ENCODE measurements at regions of chr1 and their contacts with region 1.

Region 1: DNA sequence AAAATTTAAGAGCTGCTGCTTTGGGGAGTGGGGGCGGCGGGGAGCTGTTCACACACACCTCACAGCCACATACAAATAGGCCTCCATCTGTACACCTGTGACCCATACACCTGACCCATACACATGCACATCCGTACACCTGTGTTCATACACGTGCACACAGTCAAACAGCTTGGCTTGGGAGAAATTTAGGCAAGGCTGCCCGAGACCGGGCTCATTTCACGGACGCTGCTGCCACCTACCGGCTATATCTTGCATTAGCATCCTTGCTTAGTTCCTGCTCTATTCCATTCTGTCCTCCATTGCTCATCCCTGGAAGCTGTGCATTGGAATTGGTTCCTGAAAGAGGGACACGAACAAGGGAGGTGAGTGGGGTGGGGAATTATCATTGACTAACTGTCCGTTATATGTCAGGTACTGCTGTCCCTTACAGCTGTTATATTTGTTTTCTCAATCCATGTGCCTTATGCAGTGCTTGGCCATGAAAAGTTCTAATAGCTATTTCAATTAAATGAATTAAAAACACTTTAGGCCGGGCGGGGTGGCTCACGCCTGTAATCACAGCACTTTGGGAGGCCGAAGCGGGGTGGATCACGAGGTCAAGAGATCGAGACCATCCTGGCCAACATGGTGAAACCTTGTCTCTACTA is 37.1 kb upstream of the EPB41 start:
- DNase-seq: peak; percentile 56 to 86 (median 78)
- H3K4me3 ChIP-seq: peak overlapping the region in 6 of 59 donors; percentile 2 to 18 (median 12)
- H3K27ac ChIP-seq: no peak overlapping the region
- H3K27me3 ChIP-seq: no peaks in the 10 kb centered on the region
- CTCF ChIP-seq: peak in 55 of 56 donors; percentile 84 to 99 (median 96)

Region 2: DNA sequence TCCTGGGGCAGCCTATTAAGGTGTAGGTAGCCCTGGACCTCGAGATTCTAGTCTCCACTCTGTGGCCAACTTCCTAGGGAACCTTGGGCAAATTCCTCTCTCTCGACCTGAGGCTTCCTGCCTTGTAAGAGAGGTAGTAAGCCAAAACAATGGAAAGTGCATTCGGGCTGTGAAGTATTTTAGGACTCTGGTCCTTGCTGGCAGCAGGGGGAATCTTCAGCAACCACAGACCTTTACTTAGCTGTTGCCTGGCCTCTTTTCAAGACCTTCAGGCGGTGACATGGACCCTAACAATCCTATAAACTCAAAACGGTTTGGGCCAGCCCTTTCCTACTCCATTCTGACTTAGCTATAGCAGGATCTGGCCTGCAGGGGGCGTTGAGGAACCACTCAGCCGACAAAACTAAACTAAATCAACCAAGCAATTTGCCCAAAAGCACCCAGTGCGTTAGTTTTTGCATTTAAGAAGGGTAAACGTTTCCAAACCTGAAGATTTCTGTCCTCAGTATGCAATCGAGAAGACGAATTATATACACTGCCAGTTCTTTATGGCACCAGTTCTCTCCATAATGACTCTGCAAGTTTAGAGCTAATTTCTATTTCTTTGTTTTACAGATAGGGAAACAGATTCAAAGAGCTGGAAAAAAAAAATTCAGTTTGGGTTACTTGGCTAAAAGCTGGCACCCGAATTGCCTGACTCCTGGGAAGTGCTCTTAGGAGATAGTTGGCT is 628.8 kb before region 1 on chr1:
- intact Hi-C with region 1: loop called in 1 of 2 experiments (anchors 5 kb)
- DNase-seq: peak; percentile 69 to 89 (median 78)
- H3K4me3 ChIP-seq: peak overlapping the region in 51 of 59 donors; percentile 7 to 82 (median 33)
- H3K27ac ChIP-seq: peak overlapping the region; percentile 6 to 96 (median 85)
- H3K27me3 ChIP-seq: no peaks in the 10 kb centered on the region
- CTCF ChIP-seq: peak; percentile 83 to 97 (median 94)

Region 3: GRCh38 chr1:28518000-28518744 is 359.1 kb before region 1 on chr1:
- intact Hi-C with region 1: loop called in 1 of 2 experiments (anchors 5 kb)
- DNase-seq: peak; percentile 81 to 90 (median 85)
- H3K4me3 ChIP-seq: peak overlapping the region; percentile 39 to 88 (median 72)
- H3K27ac ChIP-seq: peak overlapping the region in 52 of 59 donors; percentile 4 to 94 (median 80)
- H3K27me3 ChIP-seq: no peaks in the 10 kb centered on the region
- CTCF ChIP-seq: peak; percentile 89 to 100 (median 99)

Region 4: DNA sequence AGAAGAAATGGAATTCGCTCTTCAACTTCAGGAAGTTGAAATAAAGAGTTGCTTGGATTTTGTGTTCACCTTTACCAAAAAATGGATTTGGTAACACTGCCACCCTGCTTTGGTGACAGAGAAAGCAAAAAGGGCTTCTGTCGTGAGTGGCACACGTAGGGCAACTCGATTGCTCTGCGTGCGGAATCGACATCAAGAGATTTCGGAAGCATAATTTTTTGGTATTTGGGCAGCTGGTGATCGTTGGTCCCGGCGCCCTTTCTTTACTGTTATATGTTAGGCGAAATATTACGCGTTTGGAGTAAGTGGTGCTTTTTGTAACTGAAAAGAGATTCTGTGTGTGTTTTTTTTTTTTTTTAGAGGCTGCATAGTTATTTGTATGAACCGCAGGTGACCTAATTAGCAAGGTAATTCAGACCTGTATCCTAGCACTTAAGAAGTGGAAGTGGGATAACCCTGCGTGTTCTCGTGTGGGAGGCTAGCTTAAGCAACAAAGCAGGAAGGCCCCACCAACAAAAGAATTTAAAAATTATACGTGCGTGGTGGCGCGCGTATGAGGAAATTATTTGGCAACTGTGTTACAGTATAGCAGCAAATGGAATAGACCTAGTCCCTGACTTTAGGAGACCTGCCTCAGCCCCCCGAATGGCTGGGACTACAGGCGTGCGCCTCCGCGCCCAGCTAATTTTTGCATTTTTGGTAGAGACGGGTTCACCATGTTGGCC is 228.6 kb before region 1 on chr1 and contains the start of gene RNU11:
- intact Hi-C with region 1: loop called (anchors 5 kb)
- DNase-seq: peak; percentile 57 to 91 (median 86)
- H3K4me3 ChIP-seq: peak within 1 kb of the TSS; percentile 20 to 70 (median 57)
- H3K27ac ChIP-seq: peak within 1 kb of the TSS; percentile 54 to 100 (median 97)
- H3K27me3 ChIP-seq: no peaks in the 10 kb centered on the region
- CTCF ChIP-seq: peak in 16 of 56 donors; percentile 2 to 32 (median 12)
- total RNA-seq, gene RNU11: not detected

Region 5: DNA sequence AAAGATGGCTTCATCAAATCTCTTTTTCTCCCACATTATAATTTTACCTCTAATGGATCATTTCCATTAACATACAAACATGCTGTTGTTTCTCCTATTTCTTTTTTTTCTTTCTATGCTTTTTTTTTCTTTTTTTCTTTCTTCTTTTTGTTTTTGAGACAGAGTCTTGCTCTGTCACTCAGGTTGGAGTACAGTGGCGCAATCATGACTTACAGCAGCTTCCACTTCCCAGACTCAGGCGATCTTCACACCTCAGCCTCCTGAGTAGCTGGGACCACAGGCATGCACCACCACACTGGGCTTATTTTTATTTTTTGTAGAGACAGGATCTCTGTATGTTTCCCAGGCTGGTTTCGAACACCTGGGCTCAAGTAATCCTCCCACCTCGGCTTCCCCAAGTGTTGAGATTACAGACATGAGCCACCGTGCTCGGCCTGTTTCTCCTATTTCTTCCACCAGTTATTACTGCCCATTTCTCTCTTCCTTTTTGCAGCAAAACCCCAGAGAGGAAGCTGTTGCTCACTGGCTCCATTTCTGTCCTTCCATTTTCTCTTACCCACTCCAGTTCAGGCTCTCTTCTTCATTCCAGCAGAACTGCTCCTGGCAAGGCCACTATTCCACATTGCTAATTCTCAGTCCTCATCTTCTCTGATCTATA is 97.4 kb before region 1 on chr1:
- intact Hi-C with region 1: loop called (anchors 2 kb)
- DNase-seq: no peak
- H3K4me3 ChIP-seq: no peak overlapping the region
- H3K27ac ChIP-seq: no peak overlapping the region
- H3K27me3 ChIP-seq: no peaks in the 10 kb centered on the region
- CTCF ChIP-seq: no peak

Region 6: GRCh38 chr1:28811766-28812668 is 65.2 kb before region 1 on chr1 and contains the start of gene OPRD1:
- intact Hi-C with region 1: no loop called
- DNase-seq: peak in 2 of 10 donors; percentile 62 to 64
- H3K4me3 ChIP-seq: peak within 1 kb of the TSS in 57 of 59 donors; percentile 8 to 66 (median 48)
- H3K27ac ChIP-seq: peak within 1 kb of the TSS in 34 of 59 donors; percentile 18 to 84 (median 58)
- H3K27me3 ChIP-seq: peaks cover 0 to 77% (median 30%) of the 10 kb centered on the region in 45 donors
- CTCF ChIP-seq: no peak
- total RNA-seq, gene OPRD1: 4.5 to 30.2 (median 17.0) TPM

Region 7: GRCh38 chr1:28905921-28906666 is 28.8 kb after region 1 on chr1:
- intact Hi-C with region 1: no loop called
- DNase-seq: no peak
- H3K4me3 ChIP-seq: no peak overlapping the region
- H3K27ac ChIP-seq: no peak overlapping the region
- H3K27me3 ChIP-seq: no peaks in the 10 kb centered on the region
- CTCF ChIP-seq: no peak

Region 8: DNA sequence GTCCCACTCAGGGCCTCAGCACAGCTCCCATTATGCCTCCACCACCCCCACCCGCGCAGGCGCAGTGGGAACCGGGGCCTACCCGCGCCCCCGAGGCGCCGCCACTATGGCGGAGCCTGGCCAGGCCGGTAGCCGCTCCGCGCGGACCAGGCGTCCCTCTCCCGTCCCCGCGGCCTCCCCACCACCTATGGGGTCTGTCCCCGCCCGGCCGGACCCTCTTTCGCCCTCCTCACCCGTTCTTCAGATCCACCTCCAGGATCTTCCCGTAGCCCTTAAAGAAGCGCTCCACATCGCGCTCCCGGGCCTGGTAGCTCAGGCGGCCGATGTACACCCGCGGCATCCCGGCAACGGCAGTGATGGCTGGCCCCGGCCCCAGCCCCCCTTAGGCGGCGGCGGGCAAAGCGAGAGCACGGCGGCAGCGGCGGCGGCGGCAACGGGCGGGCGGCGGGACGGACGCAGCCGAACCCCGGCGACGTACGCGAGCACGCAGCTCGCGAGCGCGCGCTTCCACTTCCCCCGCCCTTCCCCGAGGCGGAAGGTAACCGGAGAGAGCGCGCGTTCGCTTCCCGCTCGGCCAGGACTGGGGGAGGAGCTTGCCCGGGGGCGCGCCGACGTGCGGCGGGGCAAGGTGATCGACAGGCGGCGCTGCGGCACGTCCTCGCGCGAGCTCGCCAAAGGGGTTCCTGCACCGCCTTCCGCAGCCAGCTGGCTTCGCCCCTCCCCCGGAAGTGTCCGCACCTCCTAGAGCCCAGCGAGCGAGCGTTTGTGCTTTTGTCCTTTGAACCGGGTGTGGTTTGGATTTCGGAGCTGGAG is 304.4 kb after region 1 on chr1 and contains the start of gene SRSF4:
- intact Hi-C with region 1: loop called in 1 of 2 experiments (anchors 5 kb)
- DNase-seq: peak; percentile 95 to 99 (median 98)
- H3K4me3 ChIP-seq: peak within 1 kb of the TSS; percentile 66 to 100 (median 95)
- H3K27ac ChIP-seq: peak within 1 kb of the TSS; percentile 87 to 100 (median 99)
- H3K27me3 ChIP-seq: no peaks in the 10 kb centered on the region
- CTCF ChIP-seq: peak; percentile 66 to 94 (median 83)
- total RNA-seq, gene SRSF4: 52.7 to 84.2 (median 65.8) TPM

Region 9: DNA sequence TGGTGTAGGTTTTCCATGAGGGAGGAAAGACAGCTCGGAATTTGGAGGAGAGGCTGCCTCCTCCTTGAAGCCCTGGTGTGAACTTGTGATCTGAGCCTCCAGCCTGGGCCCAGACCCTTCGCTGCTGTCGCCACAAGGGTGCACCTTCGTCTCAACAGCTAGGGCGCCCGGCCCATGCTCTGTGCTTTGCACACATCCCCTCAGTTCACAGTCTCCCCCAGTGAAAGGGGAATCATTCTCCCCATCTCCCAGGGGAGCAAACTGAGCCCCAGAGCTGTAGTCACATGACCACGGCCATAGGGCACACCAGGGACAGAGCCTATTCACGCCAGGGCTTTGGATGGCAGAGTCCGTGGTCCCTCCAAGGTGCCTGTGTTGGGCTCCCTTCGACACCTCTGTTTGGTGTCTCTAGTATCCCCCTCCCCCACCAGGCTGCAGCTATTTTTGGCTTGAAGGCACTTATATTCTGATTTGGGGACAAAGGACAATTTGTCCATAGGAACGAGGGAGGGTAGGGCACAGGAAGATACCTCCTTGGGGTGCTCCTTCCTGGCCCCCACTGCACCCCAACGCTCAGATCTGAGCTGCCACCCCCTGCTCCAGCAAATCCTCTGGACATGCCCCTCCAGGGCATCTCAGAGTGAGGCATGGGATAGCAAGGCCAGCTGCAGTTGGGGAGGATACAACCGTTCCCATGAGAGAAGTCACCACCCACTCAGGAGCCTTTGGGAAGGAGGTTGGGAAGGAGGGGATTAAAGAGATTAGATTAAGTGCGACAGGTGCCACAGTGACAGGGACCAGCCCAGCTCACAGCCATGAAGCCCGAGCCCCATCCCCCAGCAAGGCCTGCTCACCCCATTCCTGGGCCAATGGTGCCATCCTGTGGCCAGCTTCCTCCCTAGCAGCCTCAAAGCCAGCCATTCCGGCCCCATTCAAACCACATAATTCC is 1830.4 kb after region 1 on chr1:
- intact Hi-C with region 1: loop called in 1 of 2 experiments (anchors 5 kb)
- DNase-seq: peak; percentile 69 to 91 (median 84)
- H3K4me3 ChIP-seq: no peak overlapping the region
- H3K27ac ChIP-seq: peak overlapping the region in 1 of 59 donors; percentile 44
- H3K27me3 ChIP-seq: no peaks in the 10 kb centered on the region
- CTCF ChIP-seq: peak; percentile 38 to 97 (median 85)